CD8-positive, alpha-beta T cell (primary cell): ENCODE measurements at regions of chr2 and their contacts with region 1.

Region 1: DNA sequence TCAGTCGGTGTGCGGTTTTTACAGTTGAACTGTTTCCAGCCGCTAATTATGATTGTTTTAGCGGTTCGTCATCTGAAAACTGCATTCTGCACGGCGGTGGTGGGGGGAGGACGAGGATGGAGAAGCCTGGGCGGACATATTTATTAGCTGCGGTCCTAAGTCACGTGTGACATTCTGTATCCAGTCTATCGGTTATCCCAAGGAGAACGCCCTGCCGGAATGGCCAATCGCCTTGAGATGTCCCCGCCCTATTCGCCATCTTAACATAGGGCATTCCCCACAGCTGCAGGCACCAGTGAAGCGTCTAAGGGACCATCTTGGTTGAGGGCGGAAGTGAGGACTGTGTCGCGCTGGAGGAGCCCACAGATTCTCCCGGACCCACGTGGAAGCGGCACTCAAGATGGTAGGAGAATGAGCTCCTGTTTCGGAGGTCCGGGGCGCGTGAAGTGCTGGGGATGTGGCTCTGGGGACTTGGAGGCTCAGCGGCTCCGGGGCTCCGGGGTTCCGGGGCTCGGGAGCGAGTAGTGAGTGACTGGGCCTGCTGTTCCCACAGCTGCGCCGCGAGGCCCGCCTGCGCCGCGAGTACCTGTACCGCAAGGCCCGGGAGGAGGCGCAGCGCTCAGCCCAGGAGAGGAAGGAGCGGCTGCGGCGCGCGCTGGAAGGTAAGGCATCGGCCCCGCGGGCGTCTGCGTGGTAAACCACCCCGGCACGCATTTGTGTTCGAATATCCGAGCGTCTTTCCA is at the start of gene IMP4:
- DNase-seq: peak; percentile 89 to 100 (median 93)
- ATAC-seq: peak; percentile 84
- H3K4me3 ChIP-seq: peak within 1 kb of the TSS; percentile 90 to 98
- H3K4me3 Mint-ChIP-seq: peak within 1 kb of the TSS; percentile 100
- H3K27ac ChIP-seq: peak within 1 kb of the TSS; percentile 94 to 97
- H3K27ac Mint-ChIP-seq: peak within 1 kb of the TSS; percentile 100
- H3K4me1 ChIP-seq: peaks cover 21% of the 10 kb centered on the region
- H3K4me1 Mint-ChIP-seq: peaks cover 35% of the 10 kb centered on the region
- H3K27me3 ChIP-seq: no peaks in the 10 kb centered on the region
- H3K27me3 Mint-ChIP-seq: no peaks in the 10 kb centered on the region
- CTCF ChIP-seq: no peak
- total RNA-seq, gene IMP4: 108 to 120 TPM

Region 2: GRCh38 chr2:129877289-129877779 is 465.4 kb before region 1 on chr2:
- CTCF ChIA-PET with region 1: no interaction called
- POLR2A ChIA-PET with region 1: interaction called, 3 read pairs
- intact Hi-C with region 1: loop called (anchors 1 to 2 kb)
- DNase-seq: peak; percentile 62 to 93 (median 85)
- ATAC-seq: peak; percentile 95
- H3K4me3 ChIP-seq: peak overlapping the region; percentile 70 to 87
- H3K4me3 Mint-ChIP-seq: peak overlapping the region; percentile 98
- H3K27ac ChIP-seq: peak overlapping the region; percentile 49 to 58
- H3K27ac Mint-ChIP-seq: peak overlapping the region; percentile 95
- H3K4me1 ChIP-seq: peaks cover 11% of the 10 kb centered on the region
- H3K4me1 Mint-ChIP-seq: peaks cover 16% of the 10 kb centered on the region
- H3K27me3 ChIP-seq: no peaks in the 10 kb centered on the region
- H3K27me3 Mint-ChIP-seq: no peaks in the 10 kb centered on the region
- CTCF ChIP-seq: no peak

Region 3: GRCh38 chr2:130332271-130333073 is 10.2 kb before region 1 on chr2:
- CTCF ChIA-PET with region 1: interaction called, 41 read pairs
- POLR2A ChIA-PET with region 1: interaction called, 22 read pairs
- intact Hi-C with region 1: no loop called
- DNase-seq: peak; percentile 48 to 80 (median 72)
- ATAC-seq: peak; percentile 87
- H3K4me3 ChIP-seq: no peak overlapping the region
- H3K4me3 Mint-ChIP-seq: peak overlapping the region; percentile 65
- H3K27ac ChIP-seq: no peak overlapping the region
- H3K27ac Mint-ChIP-seq: no peak overlapping the region
- H3K4me1 ChIP-seq: peaks cover 6% of the 10 kb centered on the region
- H3K4me1 Mint-ChIP-seq: peaks cover 8% of the 10 kb centered on the region
- H3K27me3 ChIP-seq: peaks cover 0 to 4% of the 10 kb centered on the region in 2 experiments
- H3K27me3 Mint-ChIP-seq: peaks cover 27% of the 10 kb centered on the region
- CTCF ChIP-seq: peak; percentile 87

Region 4: GRCh38 chr2:130372055-130372832 is 29.5 kb after region 1 on chr2:
- CTCF ChIA-PET with region 1: interaction called, 14 read pairs
- POLR2A ChIA-PET with region 1: interaction called, 35 read pairs
- intact Hi-C with region 1: loop called (anchors 1 kb)
- DNase-seq: peak; percentile 41 to 87 (median 76)
- ATAC-seq: peak; percentile 78
- H3K4me3 ChIP-seq: peak overlapping the region; percentile 71 to 77
- H3K4me3 Mint-ChIP-seq: peak overlapping the region; percentile 90
- H3K27ac ChIP-seq: peak overlapping the region; percentile 46 to 81
- H3K27ac Mint-ChIP-seq: peak overlapping the region; percentile 93
- H3K4me1 ChIP-seq: peaks cover 41% of the 10 kb centered on the region
- H3K4me1 Mint-ChIP-seq: peaks cover 64% of the 10 kb centered on the region
- H3K27me3 ChIP-seq: no peaks in the 10 kb centered on the region
- H3K27me3 Mint-ChIP-seq: no peaks in the 10 kb centered on the region
- CTCF ChIP-seq: no peak

Region 5: DNA sequence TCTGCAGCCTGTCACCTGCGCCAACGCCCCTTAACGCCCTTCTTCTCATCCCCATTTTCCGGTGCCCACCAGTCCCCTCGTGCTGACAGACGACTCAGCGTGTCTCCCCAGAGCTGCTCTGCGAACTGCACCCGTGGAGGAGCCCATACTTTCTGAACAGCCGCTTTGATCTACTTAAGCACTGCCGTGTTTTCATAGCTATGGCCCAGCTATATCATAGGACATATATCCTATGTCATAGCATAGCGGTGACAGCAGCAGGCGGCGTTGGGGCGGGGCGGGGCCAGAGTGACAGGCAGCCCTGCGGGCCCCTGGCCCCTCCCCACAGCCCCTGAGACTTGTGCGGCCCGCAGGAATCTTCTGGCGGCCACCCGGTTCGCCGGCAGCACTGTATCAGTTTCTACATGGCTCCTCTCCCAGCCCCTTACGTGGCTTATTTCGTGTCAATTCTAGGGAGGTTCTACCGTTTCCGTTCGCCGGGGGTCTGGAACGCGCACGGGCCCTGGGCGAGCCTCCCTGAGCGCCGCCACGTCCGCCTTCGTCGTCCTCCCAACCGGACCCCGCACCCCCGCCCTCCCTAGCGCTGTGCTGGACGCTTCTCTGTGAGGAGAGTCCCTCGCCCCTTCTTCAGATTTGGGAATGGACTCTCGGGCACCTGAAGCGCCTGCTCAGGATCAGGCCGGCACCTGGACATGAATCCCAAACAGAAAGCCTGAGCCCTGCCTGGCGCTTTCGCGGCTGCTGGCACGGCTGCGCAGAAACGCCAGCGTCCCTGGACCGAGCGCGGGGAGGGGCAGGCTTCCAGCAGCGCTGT is 48.6 kb after region 1 on chr2:
- CTCF ChIA-PET with region 1: no interaction called
- POLR2A ChIA-PET with region 1: interaction called, 8 read pairs
- intact Hi-C with region 1: loop called in 1 of 2 experiments (anchors 1 kb)
- DNase-seq: peak in 7 of 9 experiments; percentile 35 to 71 (median 66)
- ATAC-seq: peak; percentile 97
- H3K4me3 ChIP-seq: peak overlapping the region; percentile 47 to 64
- H3K4me3 Mint-ChIP-seq: peak overlapping the region; percentile 85
- H3K27ac ChIP-seq: peak overlapping the region in 1 of 2 experiments; percentile 13
- H3K27ac Mint-ChIP-seq: peak overlapping the region; percentile 52
- H3K4me1 ChIP-seq: peaks cover 13% of the 10 kb centered on the region
- H3K4me1 Mint-ChIP-seq: peaks cover 16% of the 10 kb centered on the region
- H3K27me3 ChIP-seq: no peaks in the 10 kb centered on the region
- H3K27me3 Mint-ChIP-seq: peaks cover 21% of the 10 kb centered on the region
- CTCF ChIP-seq: no peak

Region 6: DNA sequence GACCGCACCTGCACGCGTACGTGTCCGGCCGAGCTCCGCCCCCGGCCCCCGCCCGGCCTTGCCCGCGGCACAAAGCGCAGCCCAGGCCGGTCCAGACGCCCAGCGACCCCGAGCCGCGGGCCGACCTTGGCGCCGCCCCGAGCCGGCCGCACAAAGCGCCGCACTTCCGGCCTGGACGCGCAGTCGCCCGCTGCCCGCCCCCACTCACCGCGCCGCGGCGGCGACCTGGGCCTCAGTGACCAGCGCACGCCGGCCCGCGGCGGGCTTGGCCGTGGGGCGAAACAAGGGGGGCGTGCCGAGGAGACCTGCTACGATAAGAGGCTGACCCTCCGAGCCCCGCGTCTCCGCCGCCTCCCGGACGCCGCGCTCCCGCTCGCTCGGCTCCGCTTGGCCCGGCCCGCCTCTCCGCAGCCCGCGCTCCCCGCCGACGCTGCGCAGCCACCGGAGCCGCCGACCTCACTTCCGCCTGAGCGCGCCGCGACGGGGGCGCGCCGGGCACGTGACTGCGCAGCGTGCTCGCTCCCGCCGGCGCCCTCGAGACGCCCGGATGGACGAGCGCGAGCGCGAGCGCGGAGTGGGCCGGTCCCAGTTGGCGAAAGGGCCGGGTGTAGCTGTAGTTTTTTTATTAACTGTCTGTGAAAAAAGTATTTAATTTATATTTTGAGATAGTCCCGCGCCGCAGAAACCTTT is 750.4 kb after region 1 on chr2 and contains the start of gene FAM168B:
- CTCF ChIA-PET with region 1: no interaction called
- POLR2A ChIA-PET with region 1: interaction called, 5 read pairs
- intact Hi-C with region 1: loop called (anchors 2 to 5 kb)
- DNase-seq: peak; percentile 82 to 96 (median 88)
- ATAC-seq: peak; percentile 76
- H3K4me3 ChIP-seq: peak within 1 kb of the TSS; percentile 72 to 98
- H3K4me3 Mint-ChIP-seq: peak within 1 kb of the TSS; percentile 90
- H3K27ac ChIP-seq: peak within 1 kb of the TSS; percentile 89 to 94
- H3K27ac Mint-ChIP-seq: peak within 1 kb of the TSS; percentile 93
- H3K4me1 ChIP-seq: peaks cover 16% of the 10 kb centered on the region
- H3K4me1 Mint-ChIP-seq: peaks cover 26% of the 10 kb centered on the region
- H3K27me3 ChIP-seq: no peaks in the 10 kb centered on the region
- H3K27me3 Mint-ChIP-seq: no peaks in the 10 kb centered on the region
- CTCF ChIP-seq: no peak
- total RNA-seq, gene FAM168B: 87.3 to 91.7 TPM